Sigmoid colon (tissue), 7 donors: ENCODE measurements at regions of chr1 and their contacts with region 1.

Region 1: GRCh38 chr1:43348809-43349583 is 9.8 kb upstream of the CDC20 start:
- DNase-seq: peak; percentile 91
- H3K4me3 ChIP-seq: peak overlapping the region; percentile 47 to 62 (median 60)
- H3K27ac ChIP-seq: peak overlapping the region; percentile 82 to 94 (median 88)
- H3K4me1 ChIP-seq: peaks cover 0 to 23% (median 16%) of the 10 kb centered on the region in 4 donors
- H3K27me3 ChIP-seq: no peaks in the 10 kb centered on the region
- CTCF ChIP-seq: no peak
- EP300 ChIP-seq: no peak
- POLR2A ChIP-seq: no peak

Region 2: GRCh38 chr1:43238085-43238484 is 110.9 kb before region 1 on chr1:
- intact Hi-C with region 1: loop called (anchors 5 kb)
- DNase-seq: no peak
- H3K4me3 ChIP-seq: no peak overlapping the region
- H3K27ac ChIP-seq: no peak overlapping the region
- H3K4me1 ChIP-seq: peaks cover 0 to 6% (median 0%) of the 10 kb centered on the region in 4 donors
- H3K27me3 ChIP-seq: no peaks in the 10 kb centered on the region
- CTCF ChIP-seq: peak; percentile 18 to 61 (median 54)
- EP300 ChIP-seq: no peak
- POLR2A ChIP-seq: no peak

Region 3: GRCh38 chr1:43587594-43587993 is 238.6 kb after region 1 on chr1:
- intact Hi-C with region 1: no loop called
- DNase-seq: no peak
- H3K4me3 ChIP-seq: no peak overlapping the region
- H3K27ac ChIP-seq: peak overlapping the region in 1 of 4 donors; percentile 7
- H3K4me1 ChIP-seq: peaks cover 0 to 18% (median 5%) of the 10 kb centered on the region in 4 donors
- H3K27me3 ChIP-seq: no peaks in the 10 kb centered on the region
- CTCF ChIP-seq: no peak
- EP300 ChIP-seq: no peak
- POLR2A ChIP-seq: no peak